Activated CD4-positive, alpha-beta memory T cell treated with anti-CD3 and anti-CD28 coated beads for 36 hours (primary cell): ENCODE measurements at regions of chr6 and their contacts with region 1.

Region 1: DNA sequence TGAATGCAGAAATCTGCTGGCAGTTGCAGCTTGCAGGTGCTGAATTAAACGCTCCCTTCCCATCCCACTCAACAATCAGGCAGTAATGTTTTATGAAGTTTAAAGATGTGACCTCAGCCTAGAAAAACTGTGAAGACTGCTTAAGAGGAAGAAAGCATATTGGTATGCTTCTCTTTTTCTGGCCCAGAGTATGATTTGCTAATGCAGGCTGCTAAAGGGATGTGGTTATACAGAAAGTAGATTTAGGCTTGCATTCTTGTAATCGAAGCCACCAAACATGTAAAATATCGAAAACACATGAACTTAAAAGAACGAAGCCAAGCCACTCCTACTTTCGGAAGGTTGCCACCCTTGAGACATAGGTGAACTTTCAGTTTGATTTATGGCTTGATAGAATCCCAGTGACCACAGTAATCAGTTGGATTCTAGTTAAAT is 40.7 kb downstream of the MAP3K5 start:
- DNase-seq: peak; percentile 52
- H3K4me3 Mint-ChIP-seq: peak overlapping the region; percentile 25
- H3K27ac Mint-ChIP-seq: peak overlapping the region; percentile 74
- H3K4me1 Mint-ChIP-seq: peaks cover 87% of the 10 kb centered on the region
- H3K27me3 Mint-ChIP-seq: no peaks in the 10 kb centered on the region

Region 2: GRCh38 chr6:136613477-136613876 is 138.1 kb before region 1 on chr6:
- CTCF ChIA-PET with region 1: no interaction called
- POLR2A ChIA-PET with region 1: no interaction called
- intact Hi-C with region 1: no loop called
- DNase-seq: no peak
- H3K4me3 Mint-ChIP-seq: no peak overlapping the region
- H3K27ac Mint-ChIP-seq: no peak overlapping the region
- H3K4me1 Mint-ChIP-seq: peaks cover 10% of the 10 kb centered on the region
- H3K27me3 Mint-ChIP-seq: no peaks in the 10 kb centered on the region

Region 3: DNA sequence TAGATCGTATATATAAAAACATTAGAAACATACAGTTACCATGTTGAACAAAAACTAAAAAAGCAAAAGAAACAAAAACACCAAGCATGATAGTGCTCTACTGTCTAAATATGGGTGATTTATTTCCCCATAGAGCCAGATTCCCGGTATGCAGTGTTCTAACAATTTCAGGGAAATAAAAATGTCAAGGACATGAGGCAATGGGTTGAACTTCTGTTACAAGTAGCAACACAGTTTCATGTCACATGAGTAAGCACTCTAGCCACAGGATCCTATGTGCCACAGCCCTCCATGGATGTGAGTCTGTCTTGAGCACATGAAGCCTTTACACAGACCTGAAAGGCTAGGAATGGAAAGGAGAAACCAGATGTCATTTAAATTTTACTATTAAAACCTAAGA is 55.3 kb before region 1 on chr6:
- CTCF ChIA-PET with region 1: no interaction called
- POLR2A ChIA-PET with region 1: no interaction called
- intact Hi-C with region 1: loop called (anchors 1 kb)
- DNase-seq: no peak
- H3K4me3 Mint-ChIP-seq: no peak overlapping the region
- H3K27ac Mint-ChIP-seq: no peak overlapping the region
- H3K4me1 Mint-ChIP-seq: peaks cover 18% of the 10 kb centered on the region
- H3K27me3 Mint-ChIP-seq: no peaks in the 10 kb centered on the region

Region 4: GRCh38 chr6:136719280-136720044 is 32.1 kb before region 1 on chr6:
- CTCF ChIA-PET with region 1: no interaction called
- POLR2A ChIA-PET with region 1: no interaction called
- intact Hi-C with region 1: loop called (anchors 2 kb)
- DNase-seq: no peak
- H3K4me3 Mint-ChIP-seq: no peak overlapping the region
- H3K27ac Mint-ChIP-seq: peak overlapping the region; percentile 55
- H3K4me1 Mint-ChIP-seq: peaks cover 42% of the 10 kb centered on the region
- H3K27me3 Mint-ChIP-seq: no peaks in the 10 kb centered on the region

Region 5: GRCh38 chr6:136822376-136823127 is 71.0 kb after region 1 on chr6 and contains the start of gene PEX7:
- CTCF ChIA-PET with region 1: no interaction called
- POLR2A ChIA-PET with region 1: no interaction called
- intact Hi-C with region 1: no loop called
- DNase-seq: peak; percentile 93
- H3K4me3 Mint-ChIP-seq: peak within 1 kb of the TSS; percentile 93
- H3K27ac Mint-ChIP-seq: peak within 1 kb of the TSS; percentile 95
- H3K4me1 Mint-ChIP-seq: peaks cover 17% of the 10 kb centered on the region
- H3K27me3 Mint-ChIP-seq: no peaks in the 10 kb centered on the region
- total RNA-seq, gene PEX7: 5.4 to 6.4 TPM

Region 6: DNA sequence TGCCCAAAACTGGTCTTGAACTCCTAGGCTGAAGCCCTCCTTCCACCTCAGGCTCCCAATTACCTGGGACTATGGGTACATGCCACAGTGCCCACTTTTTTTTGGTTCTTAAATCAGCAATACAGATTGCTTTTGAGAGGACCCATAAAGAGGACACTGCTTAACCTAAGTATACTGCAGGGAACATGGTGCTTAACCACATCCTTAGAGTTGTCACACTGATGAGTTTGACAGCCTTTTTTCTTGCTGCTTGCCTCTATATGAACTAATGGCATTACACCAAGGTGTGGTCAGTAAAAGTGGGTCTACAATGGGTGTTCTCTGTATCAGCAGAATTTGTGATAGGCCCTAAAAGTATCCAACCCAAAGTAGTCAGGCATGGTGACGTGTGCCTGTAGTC is 163.4 kb after region 1 on chr6:
- CTCF ChIA-PET with region 1: no interaction called
- POLR2A ChIA-PET with region 1: no interaction called
- intact Hi-C with region 1: no loop called
- DNase-seq: no peak
- H3K4me3 Mint-ChIP-seq: no peak overlapping the region
- H3K27ac Mint-ChIP-seq: no peak overlapping the region
- H3K4me1 Mint-ChIP-seq: peaks cover 1% of the 10 kb centered on the region
- H3K27me3 Mint-ChIP-seq: peaks cover 11% of the 10 kb centered on the region